ENCODE measurements at regions of chr7 and their contacts with region 1.

Region 1: DNA sequence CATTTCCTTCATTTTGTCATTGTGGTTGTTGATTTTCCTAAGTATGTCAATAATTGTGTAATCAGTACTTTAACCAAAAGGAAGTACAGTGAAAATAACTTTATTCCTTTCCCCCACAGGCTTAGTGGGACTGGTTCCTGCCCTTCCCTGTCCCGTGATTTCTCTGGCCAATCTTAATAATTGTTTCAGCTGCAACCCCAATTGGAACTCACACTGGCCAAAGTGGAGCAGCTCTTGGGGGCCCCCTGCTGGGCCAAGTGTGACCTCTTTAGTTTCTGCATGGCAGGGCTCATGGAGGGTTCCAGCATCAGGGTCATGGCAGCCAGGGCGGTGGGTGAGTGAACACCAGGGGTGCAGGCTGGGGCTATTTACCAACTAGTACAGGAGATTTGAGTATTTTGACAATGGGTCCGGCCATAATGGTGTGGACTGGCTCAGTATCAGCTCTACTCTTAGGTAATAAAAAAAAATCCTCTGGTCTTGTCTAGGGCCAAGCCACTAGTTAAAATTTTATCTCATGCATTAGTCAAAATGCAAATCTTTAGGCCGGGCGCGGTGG is 31.7 kb downstream of the CYCS start:
- DNase-seq: peak; percentile 74
- H3K4me3 ChIP-seq: no peak overlapping the region
- H3K27ac ChIP-seq: no peak overlapping the region
- H3K4me1 ChIP-seq: peaks cover 2% of the 10 kb centered on the region
- H3K27me3 ChIP-seq: peaks cover 4% of the 10 kb centered on the region in 2 experiments
- CTCF ChIP-seq: peak; percentile 89 to 90
- POLR2A ChIP-seq: no peak

Region 2: DNA sequence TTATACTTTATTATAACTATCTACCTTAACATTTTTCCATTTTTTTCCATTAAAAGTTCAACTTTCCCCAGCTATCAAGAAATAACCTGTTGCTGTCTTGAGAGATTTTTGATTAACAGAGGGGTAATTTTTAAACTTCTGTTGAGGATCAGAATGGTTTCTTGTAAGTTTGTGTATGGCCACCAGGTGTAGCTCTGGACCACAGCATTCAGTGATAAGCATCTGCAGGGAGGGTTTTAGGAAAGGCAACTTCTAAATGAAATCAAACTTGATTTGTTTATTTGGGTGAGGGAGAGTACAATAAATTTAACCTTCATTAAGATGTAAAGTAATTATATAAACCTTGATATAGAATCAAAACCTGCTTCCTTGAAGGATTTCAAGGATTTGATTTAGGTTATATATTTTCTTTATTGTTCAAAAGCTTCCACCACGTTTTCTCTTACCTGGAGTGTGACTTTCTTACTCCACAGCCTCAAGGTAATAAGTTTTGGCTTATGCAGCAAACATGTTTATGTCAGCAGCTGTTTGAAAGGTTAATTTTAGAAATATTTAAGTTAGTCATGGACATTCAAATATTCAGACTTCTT is 1230.0 kb before region 1 on chr7:
- CTCF ChIA-PET with region 1: interaction called, 5 read pairs
- POLR2A ChIA-PET with region 1: no interaction called
- dilution Hi-C with region 1: no loop called
- intact Hi-C with region 1: loop called (anchors 10 kb)
- DNase-seq: peak; percentile 15
- H3K4me3 ChIP-seq: no peak overlapping the region
- H3K27ac ChIP-seq: no peak overlapping the region
- H3K4me1 ChIP-seq: no peaks in the 10 kb centered on the region
- H3K27me3 ChIP-seq: no peaks in the 10 kb centered on the region
- CTCF ChIP-seq: peak; percentile 11 to 29
- POLR2A ChIP-seq: no peak

Region 3: GRCh38 chr7:24665564-24666294 is 427.6 kb before region 1 on chr7:
- CTCF ChIA-PET with region 1: interaction called, 11 read pairs
- POLR2A ChIA-PET with region 1: no interaction called
- dilution Hi-C with region 1: no loop called
- intact Hi-C with region 1: loop called (anchors 2 kb)
- DNase-seq: peak; percentile 66
- H3K4me3 ChIP-seq: no peak overlapping the region
- H3K27ac ChIP-seq: no peak overlapping the region
- H3K4me1 ChIP-seq: peaks cover 25% of the 10 kb centered on the region
- H3K27me3 ChIP-seq: no peaks in the 10 kb centered on the region
- CTCF ChIP-seq: peak; percentile 48 to 56
- POLR2A ChIP-seq: no peak

Region 4: GRCh38 chr7:24812310-24812945 is 280.9 kb before region 1 on chr7:
- CTCF ChIA-PET with region 1: interaction called, 268 read pairs
- POLR2A ChIA-PET with region 1: no interaction called
- dilution Hi-C with region 1: no loop called
- intact Hi-C with region 1: loop called (anchors 1 kb)
- DNase-seq: peak; percentile 54
- H3K4me3 ChIP-seq: no peak overlapping the region
- H3K27ac ChIP-seq: no peak overlapping the region
- H3K4me1 ChIP-seq: no peaks in the 10 kb centered on the region
- H3K27me3 ChIP-seq: no peaks in the 10 kb centered on the region
- CTCF ChIP-seq: peak; percentile 85 to 86
- POLR2A ChIP-seq: no peak

Region 5: GRCh38 chr7:24836084-24836483 is 257.3 kb before region 1 on chr7:
- CTCF ChIA-PET with region 1: interaction called, 13 read pairs
- POLR2A ChIA-PET with region 1: no interaction called
- dilution Hi-C with region 1: no loop called
- intact Hi-C with region 1: no loop called
- DNase-seq: no peak
- H3K4me3 ChIP-seq: no peak overlapping the region
- H3K27ac ChIP-seq: no peak overlapping the region
- H3K4me1 ChIP-seq: peaks cover 16% of the 10 kb centered on the region
- H3K27me3 ChIP-seq: no peaks in the 10 kb centered on the region
- CTCF ChIP-seq: no peak
- POLR2A ChIP-seq: no peak

Region 6: GRCh38 chr7:25069900-25070443 is 23.4 kb before region 1 on chr7:
- CTCF ChIA-PET with region 1: interaction called, 38 read pairs
- POLR2A ChIA-PET with region 1: no interaction called
- dilution Hi-C with region 1: no loop called
- intact Hi-C with region 1: loop called (anchors 1 kb)
- DNase-seq: peak; percentile 70
- H3K4me3 ChIP-seq: no peak overlapping the region
- H3K27ac ChIP-seq: no peak overlapping the region
- H3K4me1 ChIP-seq: no peaks in the 10 kb centered on the region
- H3K27me3 ChIP-seq: peaks cover 0 to 2% of the 10 kb centered on the region in 2 experiments
- CTCF ChIP-seq: peak; percentile 65 to 73
- POLR2A ChIP-seq: no peak

Region 7: GRCh38 chr7:25158966-25159365 is 65.6 kb after region 1 on chr7:
- CTCF ChIA-PET with region 1: interaction called, 4 read pairs
- POLR2A ChIA-PET with region 1: no interaction called
- dilution Hi-C with region 1: no loop called
- intact Hi-C with region 1: loop called (anchors 1 kb)
- DNase-seq: no peak
- H3K4me3 ChIP-seq: no peak overlapping the region
- H3K27ac ChIP-seq: no peak overlapping the region
- H3K4me1 ChIP-seq: no peaks in the 10 kb centered on the region
- H3K27me3 ChIP-seq: no peaks in the 10 kb centered on the region
- CTCF ChIP-seq: no peak
- POLR2A ChIP-seq: no peak

Region 8: GRCh38 chr7:25642849-25643248 is 549.5 kb after region 1 on chr7:
- CTCF ChIA-PET with region 1: no interaction called
- POLR2A ChIA-PET with region 1: no interaction called
- dilution Hi-C with region 1: no loop called
- intact Hi-C with region 1: no loop called
- DNase-seq: no peak
- H3K4me3 ChIP-seq: no peak overlapping the region
- H3K27ac ChIP-seq: no peak overlapping the region
- H3K4me1 ChIP-seq: no peaks in the 10 kb centered on the region
- H3K27me3 ChIP-seq: no peaks in the 10 kb centered on the region
- CTCF ChIP-seq: no peak
- POLR2A ChIP-seq: no peak